CD8-positive, alpha-beta T cell (primary cell): ENCODE measurements at regions of chr13 and their contacts with region 1.

Region 1: DNA sequence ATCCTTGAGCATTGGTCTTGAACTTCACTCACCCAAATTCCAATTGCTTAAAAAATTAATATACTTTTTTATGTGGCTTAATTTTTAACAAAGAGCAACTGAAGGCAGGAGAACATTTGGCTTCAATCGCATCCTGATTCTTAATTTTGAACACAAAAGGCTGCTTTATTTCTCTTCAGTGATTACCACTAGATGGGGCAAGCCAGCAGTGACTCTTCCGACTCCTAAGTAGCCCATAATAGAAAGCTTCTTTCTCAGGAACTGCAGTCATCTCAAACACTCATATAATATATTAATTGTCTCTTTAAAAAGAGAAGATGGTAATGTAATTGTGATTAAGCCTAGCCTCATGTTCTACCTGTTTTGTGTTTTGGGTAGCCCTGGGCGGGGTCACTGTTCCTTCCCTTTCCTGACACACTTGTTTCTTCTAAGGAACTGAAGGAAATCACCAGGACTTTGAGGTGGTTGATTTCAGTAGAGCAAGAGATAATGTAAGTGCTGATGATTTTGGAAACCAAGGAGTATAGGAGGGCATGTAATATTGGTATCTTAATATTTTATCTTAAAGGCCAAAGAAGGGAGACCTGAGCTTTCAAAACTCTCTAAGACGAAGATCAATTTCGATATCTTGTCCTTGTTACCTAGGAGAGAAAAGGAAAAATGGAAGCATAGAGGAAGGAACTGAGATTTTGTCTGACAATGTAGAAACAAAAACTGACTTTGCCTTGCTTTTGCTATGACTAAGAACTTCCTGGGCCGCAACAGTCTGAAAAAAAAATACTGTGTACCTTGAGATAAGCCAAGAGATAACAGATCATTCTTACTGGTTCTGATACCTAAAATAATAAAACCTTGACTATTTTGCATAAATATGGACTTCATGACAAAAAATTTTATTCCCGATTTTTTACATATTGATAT is 73.1 kb downstream of the TNFSF13B start:
- DNase-seq: peak in 2 of 9 experiments; percentile 14 to 35
- ATAC-seq: no peak
- H3K4me3 ChIP-seq: no peak overlapping the region
- H3K4me3 Mint-ChIP-seq: no peak overlapping the region
- H3K27ac ChIP-seq: no peak overlapping the region
- H3K27ac Mint-ChIP-seq: no peak overlapping the region
- H3K4me1 ChIP-seq: peaks cover 6% of the 10 kb centered on the region
- H3K4me1 Mint-ChIP-seq: peaks cover 9% of the 10 kb centered on the region
- H3K27me3 ChIP-seq: no peaks in the 10 kb centered on the region
- H3K27me3 Mint-ChIP-seq: peaks cover 2% of the 10 kb centered on the region
- CTCF ChIP-seq: peak; percentile 18

Region 2: DNA sequence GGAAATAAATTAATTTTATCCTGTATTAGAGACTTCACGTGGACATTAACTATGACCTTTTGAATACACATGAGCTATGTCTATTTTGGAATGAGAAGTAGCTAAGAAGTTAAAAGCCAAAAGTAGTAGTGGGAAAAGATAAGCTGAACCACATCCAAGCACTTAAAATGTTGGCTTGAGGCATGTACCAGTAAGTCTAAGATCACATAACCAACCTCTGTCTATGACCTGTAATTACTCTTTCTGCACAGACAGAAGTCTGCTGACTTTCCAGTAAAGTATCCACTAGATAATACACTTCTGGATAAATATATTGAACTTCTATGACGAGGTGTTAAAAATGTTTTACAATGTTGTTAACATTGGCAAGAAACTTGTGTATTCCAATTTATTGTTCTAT is 196.0 kb before region 1 on chr13:
- CTCF ChIA-PET with region 1: no interaction called
- POLR2A ChIA-PET with region 1: no interaction called
- intact Hi-C with region 1: no loop called
- DNase-seq: no peak
- ATAC-seq: no peak
- H3K4me3 ChIP-seq: no peak overlapping the region
- H3K4me3 Mint-ChIP-seq: no peak overlapping the region
- H3K27ac ChIP-seq: no peak overlapping the region
- H3K27ac Mint-ChIP-seq: no peak overlapping the region
- H3K4me1 ChIP-seq: no peaks in the 10 kb centered on the region
- H3K4me1 Mint-ChIP-seq: no peaks in the 10 kb centered on the region
- H3K27me3 ChIP-seq: no peaks in the 10 kb centered on the region
- H3K27me3 Mint-ChIP-seq: peaks cover 8% of the 10 kb centered on the region
- CTCF ChIP-seq: no peak

Region 3: GRCh38 chr13:108508263-108508662 is 165.6 kb after region 1 on chr13:
- CTCF ChIA-PET with region 1: interaction called, 10 read pairs
- POLR2A ChIA-PET with region 1: interaction called, 4 read pairs
- intact Hi-C with region 1: loop called in 1 of 2 experiments (anchors 5 kb)
- DNase-seq: peak in 2 of 9 experiments; percentile 6 to 24
- ATAC-seq: no peak
- H3K4me3 ChIP-seq: no peak overlapping the region
- H3K4me3 Mint-ChIP-seq: no peak overlapping the region
- H3K27ac ChIP-seq: no peak overlapping the region
- H3K27ac Mint-ChIP-seq: no peak overlapping the region
- H3K4me1 ChIP-seq: no peaks in the 10 kb centered on the region
- H3K4me1 Mint-ChIP-seq: no peaks in the 10 kb centered on the region
- H3K27me3 ChIP-seq: no peaks in the 10 kb centered on the region
- H3K27me3 Mint-ChIP-seq: no peaks in the 10 kb centered on the region
- CTCF ChIP-seq: no peak